ENCODE measurements at regions of chr13 and their contacts with region 1.

Region 1: GRCh38 chr13:95115525-95115924 is 185.7 kb downstream of the ABCC4 start:
- DNase-seq: no peak
- H3K4me3 Mint-ChIP-seq: no peak overlapping the region
- H3K27ac Mint-ChIP-seq: peak overlapping the region; percentile 58
- H3K4me1 Mint-ChIP-seq: no peaks in the 10 kb centered on the region
- H3K27me3 Mint-ChIP-seq: no peaks in the 10 kb centered on the region
- CTCF ChIP-seq: no peak

Region 2: DNA sequence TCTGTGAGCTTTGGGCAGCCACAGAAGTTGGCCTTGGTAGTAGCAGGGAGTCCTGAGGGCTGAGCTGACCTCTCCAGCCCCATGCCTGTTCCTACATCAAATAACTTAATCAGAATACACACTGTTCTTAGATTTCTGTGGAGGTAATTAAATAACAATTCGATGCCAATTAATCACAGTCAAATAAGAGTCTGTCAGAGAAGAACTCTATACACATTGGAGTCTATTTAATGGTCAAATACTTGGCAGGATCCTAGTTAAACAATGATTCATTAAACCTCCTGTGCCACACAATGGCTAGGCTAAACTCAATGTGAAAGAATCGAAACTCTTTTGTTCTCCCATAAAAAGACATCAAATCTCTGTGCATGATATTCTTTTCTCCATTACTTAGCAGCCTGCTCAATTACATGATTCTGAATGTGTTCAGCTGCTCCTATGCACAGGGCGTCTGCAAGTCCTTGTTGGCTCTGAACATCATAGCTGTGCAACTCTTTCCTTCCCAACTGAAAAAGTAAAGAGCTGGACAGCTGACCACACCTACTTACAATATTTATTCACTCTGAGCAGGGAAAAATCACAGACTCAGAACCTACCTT is 12.6 kb after region 1 on chr13:
- CTCF ChIA-PET with region 1: no interaction called
- intact Hi-C with region 1: loop called (anchors 2 kb)
- DNase-seq: no peak
- H3K4me3 Mint-ChIP-seq: peak overlapping the region; percentile 38
- H3K27ac Mint-ChIP-seq: peak overlapping the region; percentile 60
- H3K4me1 Mint-ChIP-seq: peaks cover 18% of the 10 kb centered on the region
- H3K27me3 Mint-ChIP-seq: no peaks in the 10 kb centered on the region
- CTCF ChIP-seq: no peak